ENCODE measurements at regions of chrX and their contacts with region 1.

Region 1: GRCh38 chrX:123833387-123833786 is 26.5 kb upstream of the XIAP start:
- DNase-seq: peak; percentile 55
- H3K4me3 ChIP-seq: no peak overlapping the region
- H3K27ac ChIP-seq: no peak overlapping the region
- H3K4me1 ChIP-seq: no peaks in the 10 kb centered on the region
- H3K27me3 ChIP-seq: no peaks in the 10 kb centered on the region
- CTCF ChIP-seq: peak; percentile 54 to 56
- POLR2A ChIP-seq: no peak

Region 2: GRCh38 chrX:123749643-123750042 is 83.7 kb before region 1 on chrX:
- CTCF ChIA-PET with region 1: no interaction called
- POLR2A ChIA-PET with region 1: no interaction called
- dilution Hi-C with region 1: no loop called
- intact Hi-C with region 1: no loop called
- DNase-seq: no peak
- H3K4me3 ChIP-seq: no peak overlapping the region
- H3K27ac ChIP-seq: no peak overlapping the region
- H3K4me1 ChIP-seq: no peaks in the 10 kb centered on the region
- H3K27me3 ChIP-seq: no peaks in the 10 kb centered on the region
- CTCF ChIP-seq: no peak
- POLR2A ChIP-seq: no peak

Region 3: GRCh38 chrX:123779908-123780396 is 53.4 kb before region 1 on chrX:
- CTCF ChIA-PET with region 1: interaction called, 21 read pairs
- POLR2A ChIA-PET with region 1: no interaction called
- dilution Hi-C with region 1: no loop called
- intact Hi-C with region 1: loop called (anchors 5 kb)
- DNase-seq: no peak
- H3K4me3 ChIP-seq: no peak overlapping the region
- H3K27ac ChIP-seq: no peak overlapping the region
- H3K4me1 ChIP-seq: no peaks in the 10 kb centered on the region
- H3K27me3 ChIP-seq: no peaks in the 10 kb centered on the region
- CTCF ChIP-seq: no peak
- POLR2A ChIP-seq: no peak

Region 4: GRCh38 chrX:123859846-123860838 is 26.8 kb after region 1 on chrX and contains the start of gene XIAP:
- CTCF ChIA-PET with region 1: interaction called, 6 read pairs
- POLR2A ChIA-PET with region 1: interaction called, 5 read pairs
- dilution Hi-C with region 1: no loop called
- intact Hi-C with region 1: loop called (anchors 1 kb)
- DNase-seq: peak; percentile 85
- H3K4me3 ChIP-seq: peak within 1 kb of the TSS; percentile 71 to 98 (median 87)
- H3K27ac ChIP-seq: peak within 1 kb of the TSS; percentile 100
- H3K4me1 ChIP-seq: peaks cover 4% of the 10 kb centered on the region
- H3K27me3 ChIP-seq: no peaks in the 10 kb centered on the region
- CTCF ChIP-seq: no peak
- POLR2A ChIP-seq: no peak
- total RNA-seq, gene XIAP: 34.5 and 38.3 TPM in 2 replicates

Region 5: GRCh38 chrX:123960042-123960611 is 126.7 kb after region 1 on chrX:
- CTCF ChIA-PET with region 1: interaction called, 19 read pairs
- POLR2A ChIA-PET with region 1: no interaction called
- dilution Hi-C with region 1: no loop called
- intact Hi-C with region 1: loop called (anchors 1 kb)
- DNase-seq: peak; percentile 95
- H3K4me3 ChIP-seq: peak overlapping the region; percentile 56 to 90 (median 80)
- H3K27ac ChIP-seq: peak overlapping the region; percentile 99
- H3K4me1 ChIP-seq: peaks cover 21% of the 10 kb centered on the region
- H3K27me3 ChIP-seq: no peaks in the 10 kb centered on the region
- CTCF ChIP-seq: peak; percentile 41 to 91
- POLR2A ChIP-seq: no peak

Region 6: GRCh38 chrX:124018023-124018422 is 184.6 kb after region 1 on chrX:
- CTCF ChIA-PET with region 1: interaction called, 16 read pairs
- POLR2A ChIA-PET with region 1: no interaction called
- dilution Hi-C with region 1: no loop called
- intact Hi-C with region 1: no loop called
- DNase-seq: peak; percentile 7
- H3K4me3 ChIP-seq: no peak overlapping the region
- H3K27ac ChIP-seq: no peak overlapping the region
- H3K4me1 ChIP-seq: peaks cover 7% of the 10 kb centered on the region
- H3K27me3 ChIP-seq: no peaks in the 10 kb centered on the region
- CTCF ChIP-seq: no peak
- POLR2A ChIP-seq: no peak

Region 7: DNA sequence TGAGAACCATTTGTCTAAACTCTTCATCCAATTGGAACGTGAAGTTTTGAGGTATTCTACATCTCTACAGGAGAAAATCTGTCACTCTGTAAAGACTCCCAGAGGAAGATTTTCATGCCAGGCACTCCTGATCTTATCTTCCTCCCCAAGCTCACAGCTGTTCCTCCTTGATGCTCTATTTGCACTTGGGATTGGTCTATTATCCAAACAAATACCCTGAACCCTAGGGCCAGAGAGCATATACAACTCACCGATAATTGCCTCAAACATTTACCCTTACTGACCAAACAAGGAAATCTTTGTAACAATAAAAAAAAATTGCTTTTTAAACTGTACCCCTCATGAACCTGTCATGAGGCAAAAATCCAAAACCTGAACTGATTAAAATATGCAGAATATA is 885.7 kb after region 1 on chrX:
- CTCF ChIA-PET with region 1: no interaction called
- POLR2A ChIA-PET with region 1: no interaction called
- dilution Hi-C with region 1: no loop called
- intact Hi-C with region 1: no loop called
- DNase-seq: no peak
- H3K4me3 ChIP-seq: no peak overlapping the region
- H3K27ac ChIP-seq: no peak overlapping the region
- H3K4me1 ChIP-seq: no peaks in the 10 kb centered on the region
- H3K27me3 ChIP-seq: no peaks in the 10 kb centered on the region
- CTCF ChIP-seq: no peak
- POLR2A ChIP-seq: no peak